IMR-90 (cell line): ENCODE measurements at regions of chr2 and their contacts with region 1.

Region 1: GRCh38 chr2:222982010-222982908 is 69.7 kb upstream of the KCNE4 start:
- DNase-seq: peak; percentile 89
- ATAC-seq: peak; percentile 95
- H3K4me3 ChIP-seq: no peak overlapping the region
- H3K27ac ChIP-seq: no peak overlapping the region
- H3K4me1 ChIP-seq: peaks cover 5% of the 10 kb centered on the region; the same call in 1 of the 2 replicates
- H3K27me3 ChIP-seq: no peaks in the 10 kb centered on the region
- CTCF ChIP-seq: peak; percentile 81
- POLR2A ChIP-seq: no peak
- RAD21 ChIP-seq: peak; percentile 85

Region 2: GRCh38 chr2:222943789-222944188 is 38.5 kb before region 1 on chr2:
- CTCF ChIA-PET with region 1: no interaction called
- POLR2A ChIA-PET with region 1: no interaction called
- dilution Hi-C with region 1: no loop called
- in situ Hi-C with region 1: no loop called
- intact Hi-C with region 1: no loop called
- DNase-seq: peak; percentile 63
- ATAC-seq: peak; percentile 40; the same call in 1 of the 2 replicates
- H3K4me3 ChIP-seq: no peak overlapping the region
- H3K27ac ChIP-seq: peak overlapping the region; percentile 84; the same call in 1 of the 2 replicates
- H3K4me1 ChIP-seq: peaks cover 13% of the 10 kb centered on the region
- H3K27me3 ChIP-seq: no peaks in the 10 kb centered on the region
- CTCF ChIP-seq: no peak
- POLR2A ChIP-seq: no peak
- RAD21 ChIP-seq: no peak

Region 3: DNA sequence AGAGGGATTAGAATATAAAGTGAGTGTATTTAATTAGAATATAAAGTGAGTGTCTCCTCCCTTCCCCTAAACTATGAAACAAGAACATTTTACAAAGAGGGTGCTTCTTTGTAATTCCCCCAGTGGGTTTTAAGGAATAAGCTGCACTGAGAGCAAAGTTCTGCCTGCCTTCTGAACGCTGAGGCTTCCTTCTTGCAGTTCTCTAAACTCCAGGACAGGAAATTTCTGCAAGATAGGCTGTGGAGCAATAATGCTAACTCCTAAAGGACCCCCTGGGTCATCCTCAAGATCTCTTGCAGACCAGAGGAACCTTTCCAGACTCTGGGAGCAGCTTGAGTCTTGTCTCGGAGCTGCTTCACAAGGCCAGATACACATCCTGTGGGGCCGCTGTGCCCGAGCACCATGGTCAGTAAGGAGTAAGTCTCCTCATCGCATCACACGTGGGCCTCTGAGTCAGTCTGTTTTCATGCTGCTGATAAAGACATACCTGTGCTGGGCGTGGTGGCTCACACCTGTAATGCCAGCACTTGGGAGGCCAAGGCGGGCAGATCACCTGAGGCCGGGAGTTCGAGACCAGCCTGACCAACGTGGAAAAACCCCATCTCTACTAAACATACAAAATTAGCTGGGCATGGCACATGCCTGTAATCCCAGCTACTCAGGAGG is 17.8 kb before region 1 on chr2:
- CTCF ChIA-PET with region 1: no interaction called
- POLR2A ChIA-PET with region 1: no interaction called
- dilution Hi-C with region 1: no loop called
- in situ Hi-C with region 1: no loop called
- intact Hi-C with region 1: no loop called
- DNase-seq: no peak
- ATAC-seq: no peak
- H3K4me3 ChIP-seq: no peak overlapping the region
- H3K27ac ChIP-seq: no peak overlapping the region
- H3K4me1 ChIP-seq: peaks cover 7% of the 10 kb centered on the region
- H3K27me3 ChIP-seq: no peaks in the 10 kb centered on the region
- CTCF ChIP-seq: no peak
- POLR2A ChIP-seq: no peak
- RAD21 ChIP-seq: no peak

Region 4: GRCh38 chr2:223051693-223052289 is 69.5 kb after region 1 on chr2 and contains the start of gene KCNE4:
- CTCF ChIA-PET with region 1: interaction called, 3 read pairs
- POLR2A ChIA-PET with region 1: no interaction called
- dilution Hi-C with region 1: no loop called
- in situ Hi-C with region 1: no loop called
- intact Hi-C with region 1: loop called (anchors 1 kb)
- DNase-seq: peak; percentile 82
- ATAC-seq: peak; percentile 25
- H3K4me3 ChIP-seq: peak within 1 kb of the TSS; percentile 41
- H3K27ac ChIP-seq: peak within 1 kb of the TSS; percentile 68
- H3K4me1 ChIP-seq: peaks cover 27% of the 10 kb centered on the region
- H3K27me3 ChIP-seq: no peaks in the 10 kb centered on the region
- CTCF ChIP-seq: no peak
- POLR2A ChIP-seq: peak; percentile 94
- RAD21 ChIP-seq: no peak
- total RNA-seq, gene KCNE4: 6.6 and 8.3 TPM in 2 replicates

Region 5: GRCh38 chr2:223180463-223180862 is 198.2 kb after region 1 on chr2:
- CTCF ChIA-PET with region 1: no interaction called
- POLR2A ChIA-PET with region 1: no interaction called
- dilution Hi-C with region 1: no loop called
- in situ Hi-C with region 1: no loop called
- intact Hi-C with region 1: loop called (anchors 10 kb)
- DNase-seq: no peak
- ATAC-seq: no peak
- H3K4me3 ChIP-seq: no peak overlapping the region
- H3K27ac ChIP-seq: no peak overlapping the region
- H3K4me1 ChIP-seq: no peaks in the 10 kb centered on the region
- H3K27me3 ChIP-seq: no peaks in the 10 kb centered on the region
- CTCF ChIP-seq: no peak
- POLR2A ChIP-seq: no peak
- RAD21 ChIP-seq: no peak

Region 6: DNA sequence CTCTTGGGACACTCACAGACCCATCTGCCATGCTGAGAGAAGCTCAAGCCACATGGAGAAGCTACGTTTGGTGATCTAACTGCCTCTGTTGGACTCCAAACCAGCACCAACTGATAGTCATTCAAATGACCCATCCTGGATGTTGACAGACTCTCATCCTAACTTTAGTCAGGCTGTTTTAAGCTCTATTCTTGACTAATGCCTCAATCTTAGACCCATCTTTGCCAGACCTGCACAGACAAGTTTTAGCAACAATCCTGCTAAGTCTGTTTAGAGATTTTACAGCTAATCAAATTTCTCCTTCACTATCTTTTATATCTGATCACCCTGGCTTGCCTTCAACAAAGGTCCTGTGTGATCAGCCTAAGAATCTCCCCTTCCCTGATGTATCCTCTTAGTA is 374.8 kb after region 1 on chr2:
- CTCF ChIA-PET with region 1: interaction called, 10 read pairs
- POLR2A ChIA-PET with region 1: no interaction called
- dilution Hi-C with region 1: no loop called
- in situ Hi-C with region 1: no loop called
- intact Hi-C with region 1: no loop called
- DNase-seq: no peak
- ATAC-seq: no peak
- H3K4me3 ChIP-seq: no peak overlapping the region
- H3K27ac ChIP-seq: no peak overlapping the region
- H3K4me1 ChIP-seq: no peaks in the 10 kb centered on the region
- H3K27me3 ChIP-seq: no peaks in the 10 kb centered on the region
- CTCF ChIP-seq: no peak
- POLR2A ChIP-seq: no peak
- RAD21 ChIP-seq: no peak

Region 7: GRCh38 chr2:223601932-223602666 is 619.8 kb after region 1 on chr2 and contains the start of gene SCG2:
- CTCF ChIA-PET with region 1: no interaction called
- POLR2A ChIA-PET with region 1: no interaction called
- dilution Hi-C with region 1: no loop called
- in situ Hi-C with region 1: loop called (anchors 10 kb)
- intact Hi-C with region 1: loop called (anchors 5 kb)
- DNase-seq: peak; percentile 96
- ATAC-seq: peak; percentile 96
- H3K4me3 ChIP-seq: no peak within 1 kb of the TSS
- H3K27ac ChIP-seq: no peak within 1 kb of the TSS
- H3K4me1 ChIP-seq: peaks cover 8% of the 10 kb centered on the region
- H3K27me3 ChIP-seq: no peaks in the 10 kb centered on the region
- CTCF ChIP-seq: peak; percentile 42
- POLR2A ChIP-seq: no peak
- RAD21 ChIP-seq: peak; percentile 41; the same call in 1 of the 2 replicates
- total RNA-seq, gene SCG2: 0.36 and 0.56 TPM in 2 replicates